Endothelial cell of umbilical vein (primary cell): ENCODE measurements at regions of chr7 and their contacts with region 1.

Region 1: GRCh38 chr7:116230191-116231005 is 20.1 kb downstream of the TES start:
- DNase-seq: no peak
- H3K4me3 ChIP-seq: no peak overlapping the region
- H3K27ac ChIP-seq: no peak overlapping the region
- H3K4me1 ChIP-seq: peaks cover 15% of the 10 kb centered on the region
- H3K27me3 ChIP-seq: no peaks in the 10 kb centered on the region
- CTCF ChIP-seq: no peak
- POLR2A ChIP-seq: no peak

Region 2: DNA sequence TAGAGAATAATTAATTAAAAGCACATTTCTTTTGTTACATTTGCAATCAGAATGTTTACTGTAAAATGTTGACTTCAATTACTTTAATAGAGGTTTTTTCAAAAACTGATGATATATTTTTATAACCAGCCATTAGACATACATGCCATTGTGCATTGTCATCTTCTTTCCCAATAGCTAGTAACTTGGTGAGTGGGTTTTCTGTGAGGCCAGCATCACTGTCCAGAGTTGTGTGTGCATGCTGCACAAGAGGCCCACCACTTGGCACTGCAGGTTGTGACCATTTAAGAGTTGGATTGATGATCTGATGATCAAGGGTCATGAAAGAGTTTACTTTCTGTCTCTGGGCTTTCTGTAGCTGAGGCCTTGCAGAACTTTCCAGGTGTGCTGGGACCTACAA is 246.3 kb before region 1 on chr7:
- CTCF ChIA-PET with region 1: no interaction called
- POLR2A ChIA-PET with region 1: no interaction called
- dilution Hi-C with region 1: no loop called
- intact Hi-C with region 1: no loop called
- DNase-seq: no peak
- H3K4me3 ChIP-seq: no peak overlapping the region
- H3K27ac ChIP-seq: no peak overlapping the region
- H3K4me1 ChIP-seq: no peaks in the 10 kb centered on the region
- H3K27me3 ChIP-seq: no peaks in the 10 kb centered on the region
- CTCF ChIP-seq: no peak
- POLR2A ChIP-seq: no peak

Region 3: GRCh38 chr7:116218051-116218645 is 12.2 kb before region 1 on chr7:
- CTCF ChIA-PET with region 1: interaction called, 22 read pairs
- POLR2A ChIA-PET with region 1: no interaction called
- dilution Hi-C with region 1: no loop called
- intact Hi-C with region 1: loop called (anchors 1 kb)
- DNase-seq: peak; percentile 97
- H3K4me3 ChIP-seq: peak overlapping the region in 1 of 3 experiments; percentile 28
- H3K27ac ChIP-seq: peak overlapping the region; percentile 96
- H3K4me1 ChIP-seq: peaks cover 56% of the 10 kb centered on the region
- H3K27me3 ChIP-seq: no peaks in the 10 kb centered on the region
- CTCF ChIP-seq: no peak
- POLR2A ChIP-seq: no peak